ENCODE measurements at regions of chr10 and their contacts with region 1.

Region 1: DNA sequence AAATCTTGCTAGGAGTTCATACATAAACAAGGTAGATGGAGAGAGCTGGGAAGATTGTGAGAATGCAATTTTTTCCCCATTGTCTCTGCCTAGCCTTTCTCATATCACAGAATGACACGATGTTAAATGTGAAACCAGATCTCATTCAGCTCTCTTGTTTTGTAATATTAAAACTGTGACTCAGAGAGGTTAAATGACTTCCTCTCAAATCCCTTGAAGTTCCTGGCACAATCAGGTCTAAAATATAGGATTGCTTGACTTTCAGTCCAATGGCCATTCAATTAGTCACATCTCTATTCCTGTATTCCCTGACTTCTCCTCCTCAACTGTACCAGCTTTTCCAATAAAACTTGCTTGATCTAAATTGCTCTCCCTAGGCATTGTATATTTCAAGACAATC is 3.1 kb downstream of the ANKRD22 start:
- ATAC-seq: peak in 4 of 8 experiments; percentile 32 to 82 (median 44)
- H3K4me3 ChIP-seq: no peak overlapping the region
- H3K27ac ChIP-seq: no peak overlapping the region
- H3K4me1 ChIP-seq: no peaks in the 10 kb centered on the region

Region 2: DNA sequence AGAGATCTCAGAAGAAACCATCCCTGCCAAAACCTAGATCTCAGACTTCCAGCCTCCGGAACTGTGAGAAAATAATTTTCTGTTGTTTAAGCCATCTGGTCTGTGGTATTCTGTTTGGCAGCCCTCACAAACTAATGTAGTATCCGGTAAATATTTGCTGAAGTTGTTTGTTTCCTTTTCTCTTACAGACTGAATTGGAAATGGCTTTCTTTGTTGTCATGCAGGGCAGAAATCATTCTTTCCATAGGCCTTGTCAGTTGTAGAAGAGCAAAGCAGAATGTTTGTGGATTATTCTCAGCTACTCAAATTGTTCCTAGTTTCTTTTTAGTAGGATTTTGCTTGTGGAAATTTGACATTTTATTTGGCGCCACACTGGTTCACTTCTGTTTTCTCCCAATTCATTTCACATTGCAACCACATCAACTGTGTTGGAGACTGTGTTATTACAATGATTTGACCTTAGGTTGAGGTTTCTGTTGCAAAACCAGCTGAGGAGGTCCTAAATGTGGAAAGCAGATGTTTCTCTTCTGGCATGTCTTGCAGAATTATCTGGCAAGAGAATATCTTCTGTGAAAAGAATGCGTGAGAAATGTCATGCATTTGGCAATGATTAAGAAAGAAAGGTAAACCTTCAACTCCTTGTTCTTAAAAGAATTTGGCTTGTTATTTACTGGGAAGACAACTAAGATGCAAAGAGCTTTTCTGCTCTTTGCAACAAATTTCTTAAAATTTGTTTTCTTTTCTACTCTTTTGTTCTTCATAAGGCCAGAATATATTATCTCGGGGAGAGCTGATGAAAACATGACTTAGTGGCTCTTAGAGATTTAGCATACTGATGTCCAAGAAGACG is 78.3 kb after region 1 on chr10:
- in situ Hi-C with region 1: loop called in 2 of 9 experiments (anchors 10 to 25 kb)
- ATAC-seq: peak in 6 of 8 experiments; percentile 46 to 90 (median 75)
- H3K4me3 ChIP-seq: no peak overlapping the region
- H3K27ac ChIP-seq: peak overlapping the region in 1 of 2 donors; percentile 13
- H3K4me1 ChIP-seq: peaks cover 9 to 12% of the 10 kb centered on the region in 2 donors

Measured in motor neuron (in vitro differentiated cells).